Activated CD4-positive, alpha-beta memory T cell treated with anti-CD3 and anti-CD28 coated beads for 36 hours (primary cell): ENCODE measurements at regions of chr10 and their contacts with region 1.

Region 1: GRCh38 chr10:26448706-26449435 is 10.7 kb downstream of the APBB1IP start:
- DNase-seq: peak; percentile 86
- H3K4me3 Mint-ChIP-seq: peak overlapping the region; percentile 50
- H3K27ac Mint-ChIP-seq: peak overlapping the region; percentile 89
- H3K4me1 Mint-ChIP-seq: peaks cover 90% of the 10 kb centered on the region
- H3K27me3 Mint-ChIP-seq: no peaks in the 10 kb centered on the region

Region 2: GRCh38 chr10:26430641-26431164 is 18.2 kb before region 1 on chr10:
- CTCF ChIA-PET with region 1: no interaction called
- POLR2A ChIA-PET with region 1: no interaction called
- intact Hi-C with region 1: loop called (anchors 1 kb)
- DNase-seq: no peak
- H3K4me3 Mint-ChIP-seq: peak overlapping the region; percentile 41
- H3K27ac Mint-ChIP-seq: peak overlapping the region; percentile 84
- H3K4me1 Mint-ChIP-seq: peaks cover 27% of the 10 kb centered on the region
- H3K27me3 Mint-ChIP-seq: no peaks in the 10 kb centered on the region

Region 3: DNA sequence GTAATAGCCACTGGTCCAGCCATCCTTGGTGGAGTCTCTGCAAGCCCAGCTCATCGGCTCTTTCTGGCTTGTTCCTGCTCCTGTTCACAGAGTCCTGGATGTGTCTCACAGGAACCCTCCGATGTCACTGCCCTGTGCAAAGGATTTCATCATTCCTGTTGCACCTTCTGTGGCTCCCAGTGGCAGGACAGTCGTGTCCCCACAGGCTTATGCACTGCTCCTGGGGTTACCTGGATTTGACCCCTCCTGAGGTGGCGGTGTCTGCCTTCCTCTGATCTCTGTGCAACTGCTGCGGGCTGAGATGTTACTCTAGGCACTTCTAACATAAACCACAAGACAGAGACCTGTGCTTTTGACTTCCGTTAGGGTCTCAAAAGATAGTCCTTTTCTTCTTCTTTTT is 19.8 kb after region 1 on chr10:
- CTCF ChIA-PET with region 1: interaction called, 3 read pairs
- POLR2A ChIA-PET with region 1: interaction called, 10 read pairs
- intact Hi-C with region 1: loop called (anchors 1 kb)
- DNase-seq: peak; percentile 53
- H3K4me3 Mint-ChIP-seq: peak overlapping the region; percentile 61
- H3K27ac Mint-ChIP-seq: peak overlapping the region; percentile 81
- H3K4me1 Mint-ChIP-seq: peaks cover 85% of the 10 kb centered on the region
- H3K27me3 Mint-ChIP-seq: no peaks in the 10 kb centered on the region

Region 4: DNA sequence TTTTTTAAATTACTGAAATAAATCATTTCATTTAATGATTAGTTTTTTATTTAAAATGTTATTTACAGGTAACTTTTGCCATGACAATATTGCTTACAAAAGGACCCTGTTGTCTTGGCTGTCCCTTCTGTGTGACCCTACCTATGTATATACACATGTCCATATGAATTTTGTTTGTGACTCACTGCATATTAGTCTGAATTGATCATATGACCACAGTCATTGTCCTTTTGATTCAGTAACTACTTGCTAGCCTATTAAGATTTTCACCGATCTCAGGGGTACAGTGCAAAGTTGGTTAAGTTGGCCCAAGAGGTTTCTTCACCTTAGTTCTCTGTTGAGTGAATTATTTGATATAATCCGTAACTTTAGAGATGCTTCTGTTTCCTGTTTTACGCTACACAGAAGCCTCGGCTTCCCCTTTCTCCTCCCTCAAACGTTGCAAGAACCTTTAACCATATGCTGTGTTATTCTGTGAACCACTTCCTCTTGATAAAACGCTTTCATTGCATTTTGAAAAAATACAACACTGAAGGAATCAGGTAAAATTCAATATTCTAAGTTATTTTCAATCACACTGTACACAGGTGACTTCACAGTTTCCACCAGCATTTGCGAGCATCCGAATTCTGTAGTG is 33.2 kb after region 1 on chr10:
- CTCF ChIA-PET with region 1: no interaction called
- POLR2A ChIA-PET with region 1: interaction called, 3 read pairs
- intact Hi-C with region 1: loop called (anchors 1 kb)
- DNase-seq: no peak
- H3K4me3 Mint-ChIP-seq: peak overlapping the region; percentile 73
- H3K27ac Mint-ChIP-seq: peak overlapping the region; percentile 98
- H3K4me1 Mint-ChIP-seq: peaks cover 76% of the 10 kb centered on the region
- H3K27me3 Mint-ChIP-seq: no peaks in the 10 kb centered on the region

Region 5: GRCh38 chr10:26612151-26612915 is 163.5 kb after region 1 on chr10:
- CTCF ChIA-PET with region 1: no interaction called
- POLR2A ChIA-PET with region 1: no interaction called
- intact Hi-C with region 1: no loop called
- DNase-seq: no peak
- H3K4me3 Mint-ChIP-seq: no peak overlapping the region
- H3K27ac Mint-ChIP-seq: no peak overlapping the region
- H3K4me1 Mint-ChIP-seq: no peaks in the 10 kb centered on the region
- H3K27me3 Mint-ChIP-seq: peaks cover 12% of the 10 kb centered on the region

Region 6: DNA sequence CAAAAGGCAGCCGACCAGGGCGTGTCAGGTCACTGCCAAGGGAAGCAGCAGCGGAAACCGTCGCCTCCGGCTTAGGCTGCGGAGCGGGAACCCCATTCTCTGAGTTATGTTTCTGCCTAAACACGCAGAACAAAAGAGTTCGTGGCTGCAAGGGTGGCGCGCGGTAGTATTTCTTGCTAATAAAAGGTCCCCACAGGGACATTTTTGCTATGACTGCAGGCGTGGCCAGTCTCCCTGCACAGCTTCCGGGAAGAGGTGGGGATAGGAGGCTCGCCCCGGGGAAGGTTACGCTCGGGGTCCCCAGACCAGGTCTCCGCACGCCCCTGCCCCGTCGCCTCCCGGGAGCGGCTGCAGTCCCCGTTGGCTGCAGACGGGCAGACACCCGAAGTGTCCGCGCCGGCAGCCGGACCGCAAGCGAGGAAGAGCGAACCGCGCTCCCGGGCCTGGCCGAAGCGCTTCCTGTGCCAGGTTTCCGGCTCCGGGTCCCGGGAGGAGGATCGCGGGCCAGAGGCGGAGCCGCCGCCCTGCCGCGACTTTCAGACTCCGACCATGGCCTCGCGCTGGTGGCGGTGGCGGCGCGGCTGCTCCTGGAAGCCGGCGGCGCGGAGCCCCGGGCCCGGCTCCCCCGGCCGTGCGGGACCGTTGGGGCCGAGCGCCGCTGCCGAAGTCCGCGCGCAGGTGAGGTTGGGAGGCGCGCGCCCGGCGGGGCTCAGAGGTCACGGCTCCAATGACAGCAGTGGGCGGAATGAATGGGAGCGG is 248.5 kb after region 1 on chr10 and contains the start of gene PDSS1:
- CTCF ChIA-PET with region 1: no interaction called
- POLR2A ChIA-PET with region 1: no interaction called
- intact Hi-C with region 1: loop called (anchors 5 kb)
- DNase-seq: peak; percentile 75
- H3K4me3 Mint-ChIP-seq: peak within 1 kb of the TSS; percentile 99
- H3K27ac Mint-ChIP-seq: peak within 1 kb of the TSS; percentile 92
- H3K4me1 Mint-ChIP-seq: peaks cover 25% of the 10 kb centered on the region
- H3K27me3 Mint-ChIP-seq: no peaks in the 10 kb centered on the region
- total RNA-seq, gene PDSS1: 12.9 to 15.4 TPM

Region 7: DNA sequence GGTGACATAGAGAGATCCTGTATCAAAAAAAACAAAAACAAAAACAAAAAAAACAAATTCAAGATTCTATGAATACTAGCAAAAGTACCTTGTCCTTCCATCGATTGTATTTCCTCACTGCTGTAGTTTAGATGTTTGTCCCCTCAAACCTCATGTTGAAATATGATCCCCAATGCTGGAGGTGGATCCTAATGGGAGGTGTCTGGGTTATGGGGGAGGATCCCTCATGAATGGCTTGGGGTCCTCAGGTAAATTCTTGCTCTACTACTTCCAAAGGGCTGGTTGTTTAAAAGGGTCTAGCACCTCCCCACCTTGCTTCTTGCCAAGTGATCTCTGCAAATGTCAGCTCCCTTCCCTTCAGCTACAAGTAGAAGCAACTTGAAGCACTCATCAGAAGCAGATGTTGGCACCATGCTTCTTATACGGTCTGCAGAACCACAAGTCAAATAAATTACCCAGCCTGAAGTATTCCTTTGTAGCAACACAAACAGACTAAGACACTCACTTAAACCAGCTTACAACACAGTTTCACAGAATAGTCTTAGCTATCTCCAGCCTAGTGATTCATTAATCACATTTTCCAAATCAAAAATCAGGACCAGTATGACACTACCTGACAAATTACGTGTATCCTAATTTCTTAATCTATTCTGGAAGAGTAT is 391.2 kb after region 1 on chr10:
- CTCF ChIA-PET with region 1: no interaction called
- POLR2A ChIA-PET with region 1: no interaction called
- intact Hi-C with region 1: no loop called
- DNase-seq: no peak
- H3K4me3 Mint-ChIP-seq: no peak overlapping the region
- H3K27ac Mint-ChIP-seq: peak overlapping the region; percentile 30
- H3K4me1 Mint-ChIP-seq: peaks cover 69% of the 10 kb centered on the region
- H3K27me3 Mint-ChIP-seq: no peaks in the 10 kb centered on the region

Region 8: GRCh38 chr10:27099916-27100812 is 651.3 kb after region 1 on chr10 and contains the start of gene ANKRD26:
- CTCF ChIA-PET with region 1: no interaction called
- POLR2A ChIA-PET with region 1: no interaction called
- intact Hi-C with region 1: loop called (anchors 10 kb)
- DNase-seq: peak; percentile 97
- H3K4me3 Mint-ChIP-seq: peak within 1 kb of the TSS; percentile 85
- H3K27ac Mint-ChIP-seq: peak within 1 kb of the TSS; percentile 95
- H3K4me1 Mint-ChIP-seq: peaks cover 40% of the 10 kb centered on the region
- H3K27me3 Mint-ChIP-seq: peaks cover 2% of the 10 kb centered on the region
- total RNA-seq, gene ANKRD26: 6.7 to 7.1 TPM